H1 (cell line): ENCODE measurements at regions of chr13 and their contacts with region 1.

Region 1: DNA sequence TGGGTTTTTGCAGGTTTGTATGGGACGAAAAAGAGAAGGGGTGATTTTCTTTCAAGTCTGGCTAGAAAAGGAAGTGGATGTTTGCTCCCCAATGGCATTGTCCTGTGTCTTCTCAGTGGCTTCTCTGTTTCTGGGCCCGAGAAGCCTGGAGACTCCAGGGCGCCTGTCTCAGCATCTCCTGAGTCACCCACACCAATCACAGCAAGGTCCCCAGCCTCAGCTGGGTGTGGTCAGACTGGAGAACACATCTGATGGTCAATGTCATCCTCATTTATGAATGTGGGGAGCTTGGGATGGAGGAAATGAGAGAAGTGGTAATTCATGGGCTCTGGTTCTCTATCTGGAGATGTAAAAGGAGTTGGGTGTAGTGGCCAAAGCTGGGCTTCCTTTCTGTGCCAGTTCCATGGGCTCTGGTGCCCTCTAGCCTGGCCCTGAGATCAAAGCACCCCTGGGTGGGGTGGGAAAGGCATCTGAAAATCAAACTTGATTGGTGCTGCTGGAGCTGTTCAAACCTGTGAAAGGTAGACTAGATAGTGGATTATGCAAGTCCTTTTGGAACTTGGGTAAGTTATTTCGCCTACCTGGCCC is 13.4 kb downstream of the RASL11A start:
- DNase-seq: no peak
- H3K4me3 ChIP-seq: no peak overlapping the region
- H3K27ac ChIP-seq: no peak overlapping the region
- H3K4me1 ChIP-seq: no peaks in the 10 kb centered on the region
- H3K27me3 ChIP-seq: no peaks in the 10 kb centered on the region
- CTCF ChIP-seq: peak in 2 of 3 experiments; percentile 25 to 28; a peak in 2 of 4 replicates
- EP300 ChIP-seq: no peak
- POLR2A ChIP-seq: no peak
- RAD21 ChIP-seq: peak; percentile 65 to 69

Region 2: GRCh38 chr13:27182844-27183497 is 101.0 kb before region 1 on chr13:
- CTCF ChIA-PET with region 1: no interaction called
- POLR2A ChIA-PET with region 1: no interaction called
- DNase-seq: no peak
- H3K4me3 ChIP-seq: no peak overlapping the region
- H3K27ac ChIP-seq: no peak overlapping the region
- H3K4me1 ChIP-seq: peaks cover 0 to 5% (median 3%) of the 10 kb centered on the region in 4 experiments; a peak in 5 of 7 replicates
- H3K27me3 ChIP-seq: no peaks in the 10 kb centered on the region
- CTCF ChIP-seq: no peak
- EP300 ChIP-seq: no peak
- POLR2A ChIP-seq: no peak
- RAD21 ChIP-seq: no peak

Region 3: DNA sequence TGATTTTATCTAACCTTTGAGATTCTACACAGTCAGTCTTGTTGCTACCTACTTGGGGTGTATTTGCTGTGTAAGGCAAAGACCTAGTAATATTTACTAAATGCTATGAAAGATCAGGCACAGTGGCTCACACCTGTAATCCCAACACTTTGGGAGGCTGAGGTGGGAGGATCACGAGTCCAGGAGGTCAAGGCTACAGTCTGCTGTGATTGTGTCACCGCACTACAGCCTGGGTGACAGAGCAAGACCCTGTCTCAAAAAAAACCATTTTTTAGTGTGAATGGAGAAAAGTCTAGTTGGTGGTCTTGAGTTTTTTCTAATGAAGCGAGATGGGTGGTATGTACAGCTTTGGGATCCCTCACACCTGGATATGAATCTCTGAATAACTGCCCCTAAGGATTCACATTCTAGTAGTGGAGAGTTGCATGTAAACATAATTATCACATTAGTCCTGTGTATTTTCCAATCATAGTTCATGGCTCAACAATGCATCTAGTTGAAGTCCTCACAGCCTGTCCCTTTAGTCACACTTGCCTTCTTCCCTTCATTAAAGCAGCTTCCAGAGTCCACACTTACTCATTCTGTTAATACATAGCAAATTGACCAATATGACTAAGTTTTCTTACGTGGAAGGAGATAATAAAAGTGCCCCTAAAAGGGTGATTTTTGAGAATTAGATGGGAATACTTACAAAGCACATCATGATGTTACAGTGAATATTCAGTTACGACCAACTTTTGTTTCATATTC is 25.2 kb before region 1 on chr13:
- CTCF ChIA-PET with region 1: interaction called, 3 read pairs
- POLR2A ChIA-PET with region 1: interaction called, 10 read pairs
- DNase-seq: no peak
- H3K4me3 ChIP-seq: no peak overlapping the region
- H3K27ac ChIP-seq: no peak overlapping the region
- H3K4me1 ChIP-seq: peaks cover 0 to 2% (median under 1%) of the 10 kb centered on the region in 4 experiments; a peak in 4 of 7 replicates
- H3K27me3 ChIP-seq: no peaks in the 10 kb centered on the region
- CTCF ChIP-seq: no peak
- EP300 ChIP-seq: no peak
- POLR2A ChIP-seq: peak; percentile 35 to 72; a peak in 2 of 3 replicates
- RAD21 ChIP-seq: no peak

Region 4: DNA sequence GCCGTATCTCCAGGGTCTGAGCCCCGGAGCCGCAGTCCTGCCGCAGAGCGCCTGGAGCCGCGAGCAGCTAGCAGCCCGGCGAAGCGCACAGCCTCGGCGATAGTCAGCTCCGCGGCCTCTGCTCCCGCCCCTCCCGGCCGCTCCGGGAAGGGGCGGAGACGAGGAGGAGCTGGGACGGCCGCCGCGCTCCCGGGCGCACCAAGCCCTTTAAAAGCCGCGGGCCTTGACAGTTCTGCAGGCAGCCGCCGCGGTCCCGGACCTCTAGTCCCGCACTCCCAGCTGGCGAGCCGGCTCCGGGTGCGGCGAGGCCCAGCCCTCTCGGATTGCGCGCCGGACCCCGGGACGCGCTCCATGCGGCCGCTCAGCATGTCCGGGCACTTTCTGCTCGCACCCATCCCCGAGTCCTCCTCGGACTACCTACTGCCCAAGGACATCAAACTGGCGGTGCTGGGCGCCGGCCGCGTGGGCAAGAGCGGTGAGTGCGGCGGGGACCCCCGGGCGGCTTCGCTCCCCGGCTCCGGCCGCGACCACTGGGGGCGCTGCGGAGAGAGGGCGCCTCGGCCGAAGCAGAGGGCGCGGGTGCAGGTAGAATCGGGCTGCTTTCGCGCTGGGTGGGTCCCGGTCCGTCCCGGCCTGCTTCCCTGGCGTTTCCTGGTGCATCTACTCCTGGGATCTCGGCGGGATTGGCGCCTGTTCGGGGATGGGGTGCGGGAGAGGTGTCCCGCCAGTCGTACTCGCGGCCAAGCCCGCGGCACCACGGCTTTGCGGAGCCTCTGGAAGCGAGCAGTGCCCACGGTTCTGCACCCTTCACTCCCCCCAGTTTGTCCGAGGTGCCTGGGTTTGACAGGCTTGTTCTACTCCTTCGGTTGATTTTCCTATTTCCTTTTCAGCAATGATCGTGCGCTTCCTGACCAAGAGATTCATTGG is 13.1 kb before region 1 on chr13 and contains the start of gene RASL11A:
- CTCF ChIA-PET with region 1: interaction called, 12 read pairs
- POLR2A ChIA-PET with region 1: interaction called, 4 read pairs
- DNase-seq: peak; percentile 74 to 92
- H3K4me3 ChIP-seq: peak within 1 kb of the TSS; percentile 57 to 78 (median 69)
- H3K27ac ChIP-seq: no peak within 1 kb of the TSS
- H3K4me1 ChIP-seq: peaks cover 0 to 3% (median 0%) of the 10 kb centered on the region in 4 experiments; a peak in 1 of 7 replicates
- H3K27me3 ChIP-seq: peaks cover 0 to 15% (median 12%) of the 10 kb centered on the region in 4 experiments; a peak in 6 of 7 replicates
- CTCF ChIP-seq: peak; percentile 68 to 74 (median 71)
- EP300 ChIP-seq: no peak
- POLR2A ChIP-seq: peak; percentile 65 to 87
- RAD21 ChIP-seq: peak in 1 of 2 experiments; percentile 57; a peak in 3 of 4 replicates
- total RNA-seq, gene RASL11A: 6.8 and 7.9 TPM in 2 replicates

Region 5: GRCh38 chr13:27311518-27312210 is 27.7 kb after region 1 on chr13:
- CTCF ChIA-PET with region 1: no interaction called
- POLR2A ChIA-PET with region 1: no interaction called
- DNase-seq: no peak
- H3K4me3 ChIP-seq: no peak overlapping the region
- H3K27ac ChIP-seq: no peak overlapping the region
- H3K4me1 ChIP-seq: peaks cover 0 to 7% (median 0%) of the 10 kb centered on the region in 4 experiments; a peak in 3 of 7 replicates
- H3K27me3 ChIP-seq: no peaks in the 10 kb centered on the region
- CTCF ChIP-seq: no peak
- EP300 ChIP-seq: no peak
- POLR2A ChIP-seq: no peak
- RAD21 ChIP-seq: no peak